ENCODE measurements at regions of chr1 and their contacts with region 1.

Region 1: GRCh38 chr1:20151906-20152598 is 12.9 kb downstream of the PLA2G2F start:
- DNase-seq: peak; percentile 91
- ATAC-seq: peak; percentile 96

Region 2: DNA sequence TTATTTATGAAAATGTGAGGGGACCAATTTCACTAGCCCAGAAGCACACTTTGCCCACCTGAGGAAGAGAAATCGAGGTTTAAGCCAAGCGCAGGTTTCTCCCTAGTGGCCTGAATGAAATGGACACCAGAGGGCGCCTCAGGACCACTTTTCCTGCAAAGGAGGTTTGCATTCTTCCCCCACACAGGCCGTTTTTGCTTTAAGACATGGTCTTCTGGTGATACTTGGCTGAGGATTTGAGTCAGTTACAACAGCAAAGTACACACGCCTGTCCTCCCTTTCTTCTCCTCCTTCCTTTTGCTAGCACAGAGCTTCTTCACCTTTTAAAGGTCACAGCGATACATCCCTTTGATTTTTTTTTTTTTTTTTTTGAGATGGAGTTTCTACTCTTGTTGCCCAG is 234.0 kb before region 1 on chr1:
- intact Hi-C with region 1: loop called (anchors 5 kb)
- DNase-seq: peak; percentile 80
- ATAC-seq: peak; percentile 87

Region 3: DNA sequence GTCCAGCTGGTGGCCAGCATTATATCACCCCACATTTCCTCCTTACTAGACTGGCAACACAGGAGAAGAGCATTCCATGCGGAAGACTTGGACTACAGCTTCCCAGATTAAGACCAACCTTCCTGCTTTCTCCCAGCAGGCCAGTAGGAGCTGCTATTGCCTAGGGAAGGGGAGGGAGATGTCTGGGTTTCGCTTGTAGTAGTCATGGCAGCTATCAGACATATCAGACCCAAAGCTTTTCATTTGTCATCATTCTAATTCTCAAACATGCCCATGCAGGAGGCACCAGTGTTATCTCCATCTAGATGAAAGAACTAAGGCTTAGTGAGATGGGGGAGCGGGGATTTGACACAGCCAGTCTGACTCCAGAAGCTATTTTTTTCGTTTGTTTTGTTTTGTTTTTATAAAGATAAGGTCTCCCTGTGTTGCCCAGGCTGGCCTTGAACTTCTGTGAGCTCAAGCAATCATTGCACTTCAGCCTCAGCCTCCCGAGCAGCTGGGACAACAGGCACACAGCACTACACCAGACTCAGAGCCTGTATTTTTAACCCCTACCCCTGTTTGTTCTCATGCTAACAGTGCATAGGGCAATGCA is 177.1 kb before region 1 on chr1:
- intact Hi-C with region 1: loop called (anchors 5 kb)
- DNase-seq: no peak
- ATAC-seq: peak; percentile 90

Region 4: GRCh38 chr1:20100632-20101355 is 51.3 kb before region 1 on chr1:
- intact Hi-C with region 1: loop called (anchors 1 kb)
- DNase-seq: no peak
- ATAC-seq: peak; percentile 83